PC-3 (cell line): ENCODE measurements at regions of chr7 and their contacts with region 1.

Region 1: DNA sequence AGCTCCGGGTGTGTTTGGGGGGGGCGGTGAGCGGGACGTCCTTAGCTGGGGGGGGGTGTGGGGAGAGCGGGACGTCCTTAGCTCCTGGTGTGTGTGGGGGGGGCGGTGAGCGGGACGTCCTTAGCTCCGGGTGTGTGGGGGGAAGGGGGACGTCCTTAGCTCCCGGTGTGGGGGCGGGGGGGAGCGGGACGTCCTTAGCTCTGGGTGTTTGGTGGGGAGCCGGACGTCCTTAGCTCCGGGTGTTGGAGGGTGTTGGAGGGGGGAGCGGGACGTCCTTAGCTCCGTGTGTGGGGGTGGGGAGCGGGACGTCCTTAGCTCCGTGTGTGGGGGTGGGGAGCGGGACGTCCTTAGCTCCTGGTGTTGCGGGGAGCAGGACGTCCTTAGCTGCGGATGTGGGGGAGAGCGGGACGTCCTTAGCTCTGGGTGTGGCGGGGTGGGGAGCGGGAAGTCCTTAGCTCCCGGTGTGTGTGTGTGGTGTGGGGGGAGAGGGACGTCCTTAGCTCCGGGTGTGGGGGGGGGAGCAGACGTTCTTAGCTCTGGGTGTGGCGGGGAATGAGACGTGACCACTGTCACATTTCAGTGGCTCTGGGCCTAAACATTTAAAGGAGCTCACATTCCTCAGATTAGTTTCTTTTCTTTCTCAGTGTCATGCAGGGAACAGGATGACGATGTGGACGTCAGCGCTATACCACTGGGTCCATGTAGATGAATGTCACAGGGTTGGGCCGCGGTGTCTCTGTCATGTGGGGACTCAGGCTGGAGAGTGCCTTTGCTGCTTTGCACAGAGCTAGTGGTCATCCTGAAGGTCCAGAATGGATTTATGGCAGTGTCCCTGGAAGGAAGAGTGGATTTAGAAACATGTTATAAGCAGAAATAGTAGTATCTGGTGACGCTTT is 7.5 kb downstream of the DYNC2I1 start:
- DNase-seq: peak; percentile 85
- ATAC-seq: peak; percentile 81
- H3K4me3 ChIP-seq: peak overlapping the region; percentile 55
- H3K27ac ChIP-seq: peak overlapping the region; percentile 85
- H3K4me1 ChIP-seq: peaks cover 34% of the 10 kb centered on the region
- H3K27me3 ChIP-seq: no peaks in the 10 kb centered on the region
- CTCF ChIP-seq: no peak

Region 2: GRCh38 chr7:157585113-157585861 is 1278.6 kb before region 1 on chr7:
- CTCF ChIA-PET with region 1: no interaction called
- POLR2A ChIA-PET with region 1: interaction called, 20 read pairs
- intact Hi-C with region 1: no loop called
- DNase-seq: no peak
- ATAC-seq: no peak
- H3K4me3 ChIP-seq: no peak overlapping the region
- H3K27ac ChIP-seq: no peak overlapping the region
- H3K4me1 ChIP-seq: no peaks in the 10 kb centered on the region
- H3K27me3 ChIP-seq: no peaks in the 10 kb centered on the region
- CTCF ChIP-seq: no peak

Region 3: DNA sequence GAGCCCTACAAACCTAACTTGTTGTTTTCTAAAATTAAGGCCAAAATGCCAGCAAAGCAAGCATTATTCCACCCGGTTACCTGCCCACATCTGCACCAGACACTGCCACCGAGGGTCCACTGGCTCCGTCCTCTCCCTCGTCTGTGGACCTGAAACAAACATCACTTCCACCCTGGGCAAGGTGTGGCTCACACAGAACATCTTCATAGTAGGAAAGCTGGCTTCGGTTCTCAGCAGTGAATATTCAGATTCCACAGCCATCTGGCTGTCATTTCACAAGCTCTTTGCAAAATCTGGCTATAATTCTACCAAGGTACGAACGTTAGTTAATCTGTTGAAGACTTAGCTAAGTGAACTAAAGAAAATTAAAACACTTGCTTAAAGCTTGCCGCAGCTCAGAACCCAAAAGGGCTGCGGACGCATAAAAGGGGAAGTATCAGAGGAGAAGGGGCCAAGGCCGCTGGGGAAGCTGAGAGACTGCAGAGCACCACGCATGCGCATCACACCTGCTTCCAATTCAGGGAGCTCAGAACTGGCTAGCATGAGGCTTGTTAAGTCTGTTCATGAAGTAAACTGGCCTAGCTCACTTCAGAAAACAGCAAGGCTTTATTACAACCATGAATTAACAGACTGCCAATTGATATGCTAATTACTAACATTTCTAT is 322.4 kb before region 1 on chr7:
- CTCF ChIA-PET with region 1: no interaction called
- POLR2A ChIA-PET with region 1: no interaction called
- intact Hi-C with region 1: no loop called
- DNase-seq: no peak
- ATAC-seq: no peak
- H3K4me3 ChIP-seq: no peak overlapping the region
- H3K27ac ChIP-seq: no peak overlapping the region
- H3K4me1 ChIP-seq: no peaks in the 10 kb centered on the region
- H3K27me3 ChIP-seq: peaks cover 26% of the 10 kb centered on the region
- CTCF ChIP-seq: no peak

Region 4: GRCh38 chr7:158726277-158726807 is 137.5 kb before region 1 on chr7:
- CTCF ChIA-PET with region 1: no interaction called
- POLR2A ChIA-PET with region 1: interaction called, 10 read pairs
- intact Hi-C with region 1: no loop called
- DNase-seq: no peak
- ATAC-seq: peak; percentile 8
- H3K4me3 ChIP-seq: no peak overlapping the region
- H3K27ac ChIP-seq: no peak overlapping the region
- H3K4me1 ChIP-seq: no peaks in the 10 kb centered on the region
- H3K27me3 ChIP-seq: no peaks in the 10 kb centered on the region
- CTCF ChIP-seq: no peak

Region 5: DNA sequence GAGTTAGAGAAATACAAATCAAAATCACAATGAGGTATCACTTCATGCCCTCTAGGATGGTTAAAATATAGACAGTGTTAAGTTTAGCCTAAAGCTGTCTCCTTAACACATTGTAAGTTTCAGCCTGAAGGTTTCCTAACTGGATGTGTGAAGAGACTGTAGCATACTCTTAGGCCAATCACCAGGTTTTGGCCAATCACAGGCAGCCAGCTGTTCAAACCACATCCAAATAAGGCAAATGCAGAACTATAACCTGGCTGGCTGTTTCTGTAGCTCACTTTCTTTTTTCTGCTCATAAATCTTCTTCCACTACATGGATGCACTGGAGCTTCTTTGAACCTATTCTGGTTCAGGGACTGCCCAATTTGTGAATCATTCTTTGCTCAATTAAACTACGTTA is 54.3 kb before region 1 on chr7:
- CTCF ChIA-PET with region 1: no interaction called
- POLR2A ChIA-PET with region 1: interaction called, 16 read pairs
- intact Hi-C with region 1: no loop called
- DNase-seq: no peak
- ATAC-seq: no peak
- H3K4me3 ChIP-seq: no peak overlapping the region
- H3K27ac ChIP-seq: no peak overlapping the region
- H3K4me1 ChIP-seq: peaks cover 9% of the 10 kb centered on the region
- H3K27me3 ChIP-seq: no peaks in the 10 kb centered on the region
- CTCF ChIP-seq: no peak

Region 6: GRCh38 chr7:158829342-158830210 is 34.3 kb before region 1 on chr7 and contains the start of gene ESYT2:
- CTCF ChIA-PET with region 1: no interaction called
- POLR2A ChIA-PET with region 1: interaction called, 14 read pairs
- intact Hi-C with region 1: loop called (anchors 1 kb)
- DNase-seq: peak; percentile 94
- ATAC-seq: peak; percentile 82
- H3K4me3 ChIP-seq: peak within 1 kb of the TSS; percentile 99
- H3K27ac ChIP-seq: peak within 1 kb of the TSS; percentile 81
- H3K4me1 ChIP-seq: peaks cover 17% of the 10 kb centered on the region
- H3K27me3 ChIP-seq: no peaks in the 10 kb centered on the region
- CTCF ChIP-seq: peak; percentile 32; the same call in 1 of the 2 replicates
- total RNA-seq, gene ESYT2: 76.1 and 78.0 TPM in 2 replicates

Region 7: DNA sequence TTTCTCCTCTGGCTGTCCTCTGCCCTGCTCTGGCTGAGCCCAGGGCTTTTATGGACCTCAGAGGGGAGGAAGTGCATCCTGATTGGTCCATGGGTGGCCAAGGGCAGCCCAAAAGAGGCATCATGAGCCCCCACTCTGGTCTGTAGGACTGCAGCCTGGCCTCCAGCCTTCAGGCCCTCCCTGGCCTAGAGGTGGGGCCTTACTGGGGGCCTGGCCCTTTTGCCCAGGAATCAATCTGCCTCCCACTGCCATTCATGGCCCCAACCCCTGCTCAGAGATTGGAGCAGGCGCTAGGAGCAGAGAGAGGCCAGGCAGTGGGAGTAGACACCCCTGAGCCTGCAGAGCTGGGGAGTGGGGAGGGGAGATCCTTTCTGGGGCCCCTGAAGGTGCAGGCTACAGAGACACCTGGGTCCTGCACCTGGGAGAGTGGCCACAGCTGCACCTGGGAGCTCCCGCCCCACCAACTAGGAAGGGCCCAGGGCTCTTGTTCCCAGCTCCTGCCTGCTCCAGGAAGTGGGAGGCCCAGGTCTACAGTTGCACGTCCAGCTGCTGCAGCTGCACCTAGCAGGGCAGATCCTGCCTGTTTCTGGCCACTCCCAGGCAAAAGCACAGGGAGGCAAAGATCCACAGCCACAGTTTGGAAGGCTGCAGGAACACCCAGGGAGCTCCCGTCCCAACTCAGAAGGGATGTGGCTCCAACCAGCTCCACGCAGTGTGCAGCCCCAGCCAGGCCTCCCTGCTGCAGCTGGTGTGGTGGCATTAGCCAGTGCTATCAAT is 13.9 kb before region 1 on chr7:
- CTCF ChIA-PET with region 1: no interaction called
- POLR2A ChIA-PET with region 1: interaction called, 34 read pairs
- intact Hi-C with region 1: no loop called
- DNase-seq: no peak
- ATAC-seq: no peak; the same call in 1 of the 2 replicates
- H3K4me3 ChIP-seq: no peak overlapping the region
- H3K27ac ChIP-seq: no peak overlapping the region
- H3K4me1 ChIP-seq: no peaks in the 10 kb centered on the region; the same call in 1 of the 2 replicates
- H3K27me3 ChIP-seq: no peaks in the 10 kb centered on the region
- CTCF ChIP-seq: no peak

Region 8: DNA sequence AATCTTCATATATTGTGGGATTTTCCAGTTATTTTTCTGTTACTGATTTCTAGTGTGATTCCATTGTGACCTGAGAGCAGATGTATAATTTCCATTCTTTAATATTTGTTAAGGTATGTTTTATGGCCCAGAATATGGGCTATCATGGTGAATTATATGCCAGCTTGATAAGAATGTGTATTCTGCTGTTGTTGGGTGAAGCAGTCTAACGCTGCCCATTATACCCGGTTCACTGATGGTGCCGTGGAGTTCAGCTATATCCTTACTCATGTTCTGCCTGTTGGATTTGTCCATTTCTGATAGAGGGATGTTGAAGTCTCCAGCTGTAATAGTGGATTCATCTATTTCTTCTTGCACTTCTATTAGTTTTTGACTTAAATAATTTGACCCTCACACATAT is 34.2 kb after region 1 on chr7:
- CTCF ChIA-PET with region 1: no interaction called
- POLR2A ChIA-PET with region 1: interaction called, 35 read pairs
- intact Hi-C with region 1: no loop called
- DNase-seq: no peak
- ATAC-seq: no peak
- H3K4me3 ChIP-seq: no peak overlapping the region
- H3K27ac ChIP-seq: no peak overlapping the region
- H3K4me1 ChIP-seq: no peaks in the 10 kb centered on the region
- H3K27me3 ChIP-seq: no peaks in the 10 kb centered on the region
- CTCF ChIP-seq: no peak

Region 9: GRCh38 chr7:158991824-158992583 is 128.1 kb after region 1 on chr7:
- CTCF ChIA-PET with region 1: no interaction called
- POLR2A ChIA-PET with region 1: no interaction called
- intact Hi-C with region 1: no loop called
- DNase-seq: no peak
- ATAC-seq: no peak; the same call in 1 of the 2 replicates
- H3K4me3 ChIP-seq: no peak overlapping the region
- H3K27ac ChIP-seq: no peak overlapping the region
- H3K4me1 ChIP-seq: no peaks in the 10 kb centered on the region
- H3K27me3 ChIP-seq: peaks cover 40% of the 10 kb centered on the region
- CTCF ChIP-seq: no peak